ENCODE measurements at regions of chr15 and their contacts with region 1.

Region 1: DNA sequence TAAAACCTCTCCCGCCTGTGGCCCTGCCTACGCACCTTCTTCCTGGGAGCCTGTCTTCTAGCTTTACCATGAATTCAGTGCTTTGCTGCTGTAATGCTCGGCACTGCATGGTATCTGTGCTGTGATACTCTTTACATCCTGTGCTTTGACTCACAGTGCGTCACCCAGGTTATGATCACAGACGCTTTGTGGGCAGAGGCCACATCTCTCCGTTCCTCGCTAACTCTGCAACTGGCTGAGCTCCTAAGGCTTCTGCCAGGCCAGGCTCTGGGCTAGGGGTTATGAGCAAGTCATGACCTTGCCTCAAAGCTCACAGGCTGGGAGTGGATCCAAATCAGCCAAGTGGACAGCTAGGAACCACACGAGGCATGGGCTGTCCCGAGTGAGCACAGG is 23.2 kb downstream of the SPTBN5 start:
- DNase-seq: peak; percentile 87
- H3K4me3 Mint-ChIP-seq: peak overlapping the region; percentile 7
- H3K27ac Mint-ChIP-seq: peak overlapping the region; percentile 77
- H3K4me1 Mint-ChIP-seq: peaks cover 20% of the 10 kb centered on the region
- H3K27me3 Mint-ChIP-seq: no peaks in the 10 kb centered on the region

Region 2: DNA sequence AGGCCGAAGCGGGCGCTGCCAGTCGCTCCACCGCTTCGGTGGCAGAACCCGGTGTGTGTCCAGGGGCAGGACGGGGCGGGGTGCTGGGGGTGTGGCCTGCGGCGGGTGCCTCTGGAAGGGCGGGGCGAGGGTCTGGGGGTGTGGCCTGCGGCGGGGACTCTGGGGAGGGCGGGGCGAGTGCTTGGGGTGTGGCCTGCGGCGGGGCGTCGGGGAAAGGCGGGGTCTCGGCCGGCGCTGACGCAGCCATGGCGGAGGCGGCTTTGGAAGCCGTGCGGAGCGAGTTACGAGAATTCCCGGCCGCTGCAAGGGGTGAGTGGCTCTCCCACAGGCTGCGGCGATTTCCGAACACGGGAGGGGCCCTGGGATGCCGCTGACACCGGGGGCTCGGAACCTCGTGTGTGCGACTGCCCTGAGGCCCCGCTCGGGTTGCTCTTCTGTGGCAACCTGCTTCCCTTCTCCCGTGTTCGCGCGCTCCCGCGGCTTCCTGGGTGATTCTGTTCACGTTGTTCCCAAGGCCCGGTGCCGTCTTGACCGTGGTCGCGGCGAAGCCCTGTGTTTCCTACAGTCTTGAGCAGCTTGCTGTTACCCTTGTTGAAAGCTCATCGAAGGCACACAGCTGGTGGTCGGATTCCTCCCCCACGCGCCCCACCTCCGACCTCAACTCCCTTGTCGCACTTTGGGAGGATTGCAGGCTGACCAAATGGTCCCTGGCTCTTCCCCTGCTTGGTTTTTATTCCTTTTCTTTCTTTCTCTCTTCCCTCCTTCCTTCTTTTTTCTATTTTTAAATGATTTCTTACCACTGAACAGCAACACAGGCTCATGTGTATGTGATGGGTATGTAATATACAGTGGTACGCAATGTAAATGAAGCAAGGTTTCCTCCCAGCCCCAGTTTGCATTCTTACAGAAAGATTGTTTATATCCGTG is 42.5 kb before region 1 on chr15 and contains the start of gene JMJD7:
- CTCF ChIA-PET with region 1: interaction called, 3 read pairs
- POLR2A ChIA-PET with region 1: interaction called, 6 read pairs
- intact Hi-C with region 1: loop called (anchors 1 kb)
- DNase-seq: peak; percentile 96
- H3K4me3 Mint-ChIP-seq: peak within 1 kb of the TSS; percentile 80
- H3K27ac Mint-ChIP-seq: peak within 1 kb of the TSS; percentile 52
- H3K4me1 Mint-ChIP-seq: peaks cover 40% of the 10 kb centered on the region
- H3K27me3 Mint-ChIP-seq: no peaks in the 10 kb centered on the region
- total RNA-seq, gene JMJD7: 17.9 to 24.8 TPM

Measured in activated CD4-positive, alpha-beta memory T cell treated with anti-CD3 and anti-CD28 coated beads for 36 hours (primary cell).